ENCODE measurements at regions of chr1 and their contacts with region 1.

Region 1: DNA sequence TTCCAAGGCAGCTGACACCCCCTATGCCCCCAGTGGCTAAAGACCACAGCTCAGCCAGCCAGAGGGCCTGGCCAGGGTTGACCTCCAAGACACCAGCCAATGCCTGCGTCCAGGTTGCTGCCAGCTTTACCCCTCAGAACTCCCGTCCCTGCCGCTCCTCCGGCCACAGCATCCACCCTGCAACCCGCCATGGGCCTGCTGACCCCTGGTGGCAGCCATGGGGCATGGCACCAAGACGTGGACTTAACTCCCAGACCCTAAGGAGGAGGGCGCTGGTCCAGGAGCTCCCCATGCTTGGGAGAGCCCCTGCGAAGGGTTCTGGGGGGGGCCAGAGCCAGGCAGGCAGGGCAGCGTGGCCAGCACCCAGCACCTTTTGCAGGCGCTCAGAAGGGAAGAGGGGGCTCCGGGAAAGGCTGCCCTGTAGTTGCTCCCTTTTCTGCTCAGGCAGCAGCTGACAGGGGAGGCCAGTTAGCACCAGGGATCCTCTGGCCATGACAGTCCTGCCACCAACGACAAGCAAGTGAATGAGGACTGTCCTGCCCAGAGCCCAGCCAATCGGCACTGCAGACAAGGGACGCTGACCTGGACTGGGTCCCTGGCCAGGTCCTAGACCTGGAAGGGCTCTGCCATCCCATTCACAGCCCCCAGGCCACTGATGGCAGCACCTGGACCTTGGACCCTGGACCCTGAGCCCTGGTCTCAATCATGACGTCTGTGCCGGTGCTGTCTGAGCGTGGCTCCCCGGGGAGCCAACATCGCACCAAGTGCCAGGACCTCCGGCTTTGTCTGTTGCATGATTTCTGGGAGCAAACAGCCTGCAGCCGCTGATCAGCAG is 246.2 kb downstream of the NPHP4 start:
- DNase-seq: peak; percentile 56
- H3K4me3 Mint-ChIP-seq: no peak overlapping the region
- H3K27ac Mint-ChIP-seq: no peak overlapping the region
- H3K4me1 Mint-ChIP-seq: no peaks in the 10 kb centered on the region
- H3K27me3 Mint-ChIP-seq: peaks cover 6% of the 10 kb centered on the region

Region 2: GRCh38 chr1:5297180-5297885 is 448.7 kb before region 1 on chr1:
- CTCF ChIA-PET with region 1: no interaction called
- POLR2A ChIA-PET with region 1: no interaction called
- DNase-seq: no peak
- H3K4me3 Mint-ChIP-seq: no peak overlapping the region
- H3K27ac Mint-ChIP-seq: no peak overlapping the region
- H3K4me1 Mint-ChIP-seq: no peaks in the 10 kb centered on the region
- H3K27me3 Mint-ChIP-seq: no peaks in the 10 kb centered on the region

Region 3: DNA sequence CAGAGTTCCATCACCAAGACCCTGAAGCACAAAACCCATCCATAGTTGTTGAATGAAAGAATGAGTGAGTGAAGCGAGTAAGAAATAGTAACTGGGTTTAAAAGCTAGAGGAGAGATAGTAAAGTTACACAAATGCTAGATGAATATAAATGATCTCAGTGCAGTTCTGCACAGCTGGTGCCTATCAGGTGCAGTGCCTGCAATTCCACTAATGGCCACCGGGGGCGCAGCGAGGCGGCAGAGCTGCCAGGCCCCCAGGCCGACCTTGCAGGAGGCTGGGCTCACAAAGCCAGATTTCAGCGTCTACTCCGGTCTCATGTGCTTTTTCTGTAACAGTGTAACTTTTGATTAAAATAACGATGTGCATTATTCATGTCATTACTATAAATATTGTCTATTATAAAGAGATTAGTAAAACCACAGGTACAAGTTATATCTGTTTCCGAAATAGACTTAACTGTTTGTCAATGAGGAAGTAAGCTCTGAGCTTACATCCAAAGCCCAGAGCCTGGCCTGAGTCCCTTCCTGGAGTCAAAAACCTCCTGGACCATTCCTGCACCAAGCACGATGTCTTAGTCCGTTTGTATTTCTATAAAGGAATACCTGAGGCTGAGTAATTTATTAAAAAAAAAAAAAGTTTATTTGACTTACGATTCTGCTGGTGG is 231.3 kb before region 1 on chr1:
- CTCF ChIA-PET with region 1: interaction called, 11 read pairs
- POLR2A ChIA-PET with region 1: no interaction called
- DNase-seq: peak; percentile 67
- H3K4me3 Mint-ChIP-seq: no peak overlapping the region
- H3K27ac Mint-ChIP-seq: no peak overlapping the region
- H3K4me1 Mint-ChIP-seq: no peaks in the 10 kb centered on the region
- H3K27me3 Mint-ChIP-seq: peaks cover 9% of the 10 kb centered on the region

Region 4: GRCh38 chr1:5637171-5637570 is 108.8 kb before region 1 on chr1:
- CTCF ChIA-PET with region 1: interaction called, 17 read pairs
- POLR2A ChIA-PET with region 1: interaction called, 3 read pairs
- DNase-seq: peak; percentile 41
- H3K4me3 Mint-ChIP-seq: no peak overlapping the region
- H3K27ac Mint-ChIP-seq: no peak overlapping the region
- H3K4me1 Mint-ChIP-seq: no peaks in the 10 kb centered on the region
- H3K27me3 Mint-ChIP-seq: peaks cover 5% of the 10 kb centered on the region

Measured in activated CD4-positive, alpha-beta memory T cell treated with anti-CD3 and anti-CD28 coated beads, Interleukin-2, amount 10 ng/mL, durations not matched to agents 7 days and 5 days (primary cell).